Naive thymus-derived CD8-positive, alpha-beta T cell (primary cell): ENCODE measurements at regions of chr2 and their contacts with region 1.

Region 1: DNA sequence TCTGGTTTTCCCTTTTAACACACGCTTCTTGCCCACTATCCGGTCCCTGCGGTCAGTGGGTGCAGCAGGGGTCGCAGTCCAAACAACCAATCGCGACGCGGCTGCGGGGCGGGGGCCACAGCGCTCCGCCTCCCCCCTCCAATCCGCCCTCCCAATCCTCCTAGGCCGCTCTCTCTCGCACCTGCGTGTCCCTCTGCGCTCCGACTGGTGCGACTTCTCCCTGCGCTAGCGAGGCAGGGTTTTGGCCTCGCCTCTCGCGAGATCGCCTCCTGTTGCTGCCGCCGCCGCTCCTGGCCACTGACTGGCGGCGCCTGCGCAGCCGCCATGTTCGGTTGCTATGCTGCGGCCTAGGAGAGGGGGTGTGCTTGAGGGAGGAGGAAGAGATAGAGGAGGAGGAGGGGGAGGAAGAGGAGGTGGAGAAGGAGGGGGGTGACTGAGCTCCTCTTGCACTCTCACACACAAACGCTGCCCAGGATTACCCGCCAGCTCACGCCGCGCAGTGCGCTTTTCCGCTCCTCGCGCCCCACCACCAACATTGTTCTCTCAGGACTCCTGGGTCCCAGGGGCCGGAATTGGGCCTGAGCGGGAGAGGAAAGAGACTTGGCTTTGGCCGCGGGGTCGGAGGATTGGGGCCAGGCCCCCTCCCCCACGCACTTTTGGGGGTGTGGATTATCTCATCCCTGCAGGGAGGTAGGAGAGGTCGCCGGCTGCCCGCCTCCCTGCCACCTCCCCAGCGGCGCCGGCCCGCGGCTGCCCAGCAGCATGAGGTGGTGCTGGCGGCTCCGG is at the start of gene PTPN4:
- DNase-seq: peak; percentile 90 to 99 (median 96)
- ATAC-seq: peak; percentile 91 to 92
- H3K4me3 Mint-ChIP-seq: peak within 1 kb of the TSS; percentile 82 to 98 (median 94)
- H3K27ac Mint-ChIP-seq: peak within 1 kb of the TSS; percentile 35 to 99 (median 92)
- H3K4me1 Mint-ChIP-seq: peaks cover 18 to 49% (median 43%) of the 10 kb centered on the region in 4 donors
- H3K27me3 Mint-ChIP-seq: no peaks in the 10 kb centered on the region
- polyA plus RNA-seq, gene PTPN4: 79.4 to 111 (median 93.0) TPM

Region 2: DNA sequence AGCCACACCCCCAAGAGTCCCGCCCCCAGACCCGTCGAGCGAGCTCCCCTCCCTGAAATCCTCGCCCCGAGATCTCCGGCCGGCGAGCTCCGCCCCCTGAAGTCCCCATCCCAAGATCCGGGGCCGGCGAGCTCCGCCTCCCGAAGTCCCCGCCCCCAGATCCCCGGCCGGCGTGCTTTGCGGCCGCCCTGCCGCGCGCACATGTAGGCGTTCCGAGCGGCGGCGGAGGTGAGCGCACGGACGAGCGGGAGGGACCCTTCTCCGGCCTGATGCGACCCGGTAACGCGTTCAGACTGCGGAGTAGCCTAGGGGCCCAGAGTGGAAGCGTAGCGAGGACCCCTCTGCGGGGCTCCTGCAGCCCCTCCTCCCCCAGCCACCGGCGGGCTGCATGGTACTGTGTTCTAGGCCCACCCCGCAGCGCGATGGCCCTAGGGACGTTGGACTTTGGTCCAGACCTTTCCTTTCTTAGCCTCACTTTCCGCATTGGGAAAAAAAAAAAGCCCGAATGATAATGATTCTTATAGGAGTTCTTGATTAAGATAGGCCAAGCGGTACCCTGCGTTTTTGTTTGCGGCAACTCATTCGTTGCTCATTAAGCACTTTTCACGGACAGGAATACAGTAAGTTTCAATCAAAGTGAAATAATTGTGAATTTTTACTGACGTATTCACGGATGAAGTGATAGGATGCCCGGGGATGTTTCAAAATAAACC is 80.5 kb before region 1 on chr2 and contains the start of gene TMEM177:
- POLR2A ChIA-PET with region 1: interaction called, 13 read pairs
- DNase-seq: peak; percentile 79 to 92 (median 86)
- ATAC-seq: peak; percentile 79 to 87
- H3K4me3 Mint-ChIP-seq: peak within 1 kb of the TSS; percentile 83 to 98 (median 96)
- H3K27ac Mint-ChIP-seq: peak within 1 kb of the TSS; percentile 91 to 100 (median 94)
- H3K4me1 Mint-ChIP-seq: peaks cover 26 to 47% (median 40%) of the 10 kb centered on the region in 4 donors
- H3K27me3 Mint-ChIP-seq: no peaks in the 10 kb centered on the region
- polyA plus RNA-seq, gene TMEM177: 10.2 to 18.2 (median 15.5) TPM

Region 3: GRCh38 chr2:119772128-119772527 is 12.5 kb after region 1 on chr2:
- POLR2A ChIA-PET with region 1: interaction called, 25 read pairs
- DNase-seq: no peak
- ATAC-seq: no peak
- H3K4me3 Mint-ChIP-seq: peak overlapping the region in 3 of 10 donors; percentile 6 to 30 (median 20)
- H3K27ac Mint-ChIP-seq: peak overlapping the region in 7 of 10 donors; percentile 1 to 76 (median 56)
- H3K4me1 Mint-ChIP-seq: peaks cover 13 to 49% (median 44%) of the 10 kb centered on the region in 4 donors
- H3K27me3 Mint-ChIP-seq: no peaks in the 10 kb centered on the region

Region 4: GRCh38 chr2:119929537-119929936 is 169.9 kb after region 1 on chr2:
- POLR2A ChIA-PET with region 1: interaction called, 11 read pairs
- DNase-seq: peak in 6 of 10 donors; percentile 4 to 73 (median 44)
- ATAC-seq: peak; percentile 89 to 96
- H3K4me3 Mint-ChIP-seq: peak overlapping the region; percentile 74 to 91 (median 82)
- H3K27ac Mint-ChIP-seq: peak overlapping the region; percentile 84 to 98 (median 94)
- H3K4me1 Mint-ChIP-seq: peaks cover 24 to 72% (median 53%) of the 10 kb centered on the region in 4 donors
- H3K27me3 Mint-ChIP-seq: no peaks in the 10 kb centered on the region